WTC11 (cell line): ENCODE measurements at regions of chr3 and their contacts with region 1.

Region 1: DNA sequence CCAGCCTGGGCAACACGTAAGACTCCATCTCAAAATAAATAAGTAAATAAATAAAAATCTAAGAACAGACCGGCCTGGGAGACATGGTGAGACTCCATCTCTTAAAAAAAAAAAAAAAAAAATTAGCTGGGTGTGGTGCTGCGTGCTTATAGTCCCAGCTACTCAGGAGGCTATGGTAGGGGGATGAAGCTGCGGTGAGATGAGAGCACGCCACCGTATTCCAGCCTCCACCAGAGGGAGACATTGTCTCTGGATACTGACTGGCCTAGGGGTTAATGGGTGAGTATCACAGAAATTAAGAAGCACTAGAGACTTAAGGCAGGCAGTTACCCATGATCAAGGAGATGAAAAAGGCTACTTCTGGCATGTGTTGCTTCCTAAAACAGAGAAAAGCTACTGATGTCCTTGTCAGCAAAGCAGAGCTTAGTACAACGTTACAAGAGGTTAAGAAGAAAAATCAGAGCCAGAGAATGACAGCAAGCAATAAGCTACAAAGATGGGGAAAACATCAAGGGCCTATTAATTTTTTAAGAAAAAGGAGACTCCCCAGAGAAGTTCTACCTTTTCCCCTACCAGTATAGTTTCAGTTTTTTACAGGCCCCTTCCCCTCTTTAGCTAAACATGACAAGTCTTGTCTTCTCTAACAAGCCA is 8.6 kb downstream of the TFRC start:
- DNase-seq: peak; percentile 69
- ATAC-seq: peak; percentile 92
- H3K4me3 Mint-ChIP-seq: no peak overlapping the region
- H3K27ac Mint-ChIP-seq: peak overlapping the region; percentile 91; the same call in 1 of the 2 replicates
- H3K4me1 Mint-ChIP-seq: peaks cover 11% of the 10 kb centered on the region
- H3K27me3 Mint-ChIP-seq: no peaks in the 10 kb centered on the region
- CTCF ChIP-seq: peak; percentile 40

Region 2: GRCh38 chr3:196096382-196096953 is 23.2 kb after region 1 on chr3:
- CTCF ChIA-PET with region 1: interaction called, 11 read pairs
- POLR2A ChIA-PET with region 1: no interaction called
- DNase-seq: no peak
- ATAC-seq: no peak
- H3K4me3 Mint-ChIP-seq: no peak overlapping the region
- H3K27ac Mint-ChIP-seq: peak overlapping the region; percentile 78
- H3K4me1 Mint-ChIP-seq: peaks cover 9% of the 10 kb centered on the region
- H3K27me3 Mint-ChIP-seq: no peaks in the 10 kb centered on the region
- CTCF ChIP-seq: no peak

Region 3: GRCh38 chr3:196186651-196187573 is 113.6 kb after region 1 on chr3:
- CTCF ChIA-PET with region 1: interaction called, 50 read pairs
- POLR2A ChIA-PET with region 1: no interaction called
- DNase-seq: peak; percentile 70
- ATAC-seq: peak; percentile 95
- H3K4me3 Mint-ChIP-seq: peak overlapping the region; percentile 34
- H3K27ac Mint-ChIP-seq: peak overlapping the region; percentile 41
- H3K4me1 Mint-ChIP-seq: peaks cover 10% of the 10 kb centered on the region
- H3K27me3 Mint-ChIP-seq: no peaks in the 10 kb centered on the region
- CTCF ChIP-seq: no peak

Region 4: DNA sequence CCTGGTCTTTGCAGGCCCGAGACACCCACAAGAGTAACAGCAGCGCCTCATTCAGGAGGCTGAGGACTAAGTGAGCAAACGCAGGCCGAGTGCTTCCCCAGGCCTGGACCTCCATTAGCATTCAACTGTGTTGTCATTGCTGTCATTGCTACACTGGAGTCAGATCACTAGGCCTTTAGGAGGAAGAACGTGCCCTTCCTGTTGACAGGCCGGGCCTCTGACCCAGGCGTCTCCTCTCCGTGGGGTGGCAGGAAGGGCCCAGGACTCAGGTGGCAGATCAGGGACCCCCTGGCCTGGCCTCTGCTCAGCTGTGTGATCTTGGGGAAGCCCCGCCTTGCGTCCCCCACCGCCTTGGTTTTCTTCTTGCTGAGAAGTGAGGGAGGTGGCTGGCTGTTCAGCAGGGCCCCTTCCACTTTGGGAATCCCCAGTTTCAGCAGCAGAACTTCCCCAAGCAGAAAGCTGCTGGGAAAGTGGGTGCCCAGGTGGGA is 118.8 kb after region 1 on chr3:
- CTCF ChIA-PET with region 1: interaction called, 58 read pairs
- POLR2A ChIA-PET with region 1: no interaction called
- DNase-seq: peak; percentile 72
- ATAC-seq: peak; percentile 51
- H3K4me3 Mint-ChIP-seq: no peak overlapping the region
- H3K27ac Mint-ChIP-seq: no peak overlapping the region
- H3K4me1 Mint-ChIP-seq: peaks cover 9% of the 10 kb centered on the region
- H3K27me3 Mint-ChIP-seq: no peaks in the 10 kb centered on the region
- CTCF ChIP-seq: no peak

Region 5: DNA sequence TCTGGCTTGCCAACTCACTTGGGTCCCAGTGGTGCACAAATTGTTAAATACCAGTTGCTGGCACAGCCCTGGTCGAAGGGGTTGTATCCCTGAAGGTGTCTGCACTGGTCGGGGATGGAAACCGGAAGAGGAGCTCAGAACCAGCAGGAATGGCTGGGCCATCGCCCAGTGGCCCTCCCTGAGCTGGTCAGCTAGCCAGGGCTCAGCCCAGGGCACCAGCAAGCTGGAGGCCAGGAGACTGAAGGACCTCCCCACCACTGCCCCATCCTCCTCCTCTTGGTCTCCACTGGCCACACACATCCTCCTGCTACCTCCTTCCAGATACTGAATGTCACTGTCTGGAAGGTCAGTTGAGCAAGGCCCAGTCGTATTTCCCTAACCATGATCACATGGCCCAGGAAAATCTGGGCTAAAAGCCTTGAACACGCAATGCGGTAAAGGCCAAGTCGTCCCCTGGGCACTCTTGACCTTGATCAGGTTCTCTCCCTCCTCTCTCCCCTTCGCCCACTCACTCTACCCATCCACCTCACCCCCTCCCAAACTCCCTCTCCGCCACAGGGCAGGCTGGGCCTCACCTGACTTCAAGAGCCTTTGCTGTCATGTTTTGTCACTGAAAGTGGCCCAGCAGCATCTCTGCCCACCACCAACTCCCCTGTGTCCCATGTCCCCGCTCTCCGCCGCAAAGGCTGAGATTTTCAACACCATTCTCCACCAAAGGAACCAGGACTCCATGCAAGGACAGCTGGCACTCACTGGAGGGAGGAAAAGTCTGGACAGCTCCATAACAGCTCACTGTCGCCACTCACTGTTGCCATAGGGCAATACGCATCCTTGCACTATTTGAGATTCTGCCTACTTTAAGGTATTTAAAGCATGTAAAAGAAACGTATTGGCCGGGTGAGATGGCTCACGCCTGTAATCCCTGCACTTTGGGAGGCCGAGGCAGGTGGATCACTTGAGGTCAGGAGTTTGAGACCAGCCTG is 125.7 kb after region 1 on chr3:
- CTCF ChIA-PET with region 1: interaction called, 58 read pairs
- POLR2A ChIA-PET with region 1: no interaction called
- DNase-seq: no peak
- ATAC-seq: peak; percentile 27; the same call in 1 of the 2 replicates
- H3K4me3 Mint-ChIP-seq: no peak overlapping the region
- H3K27ac Mint-ChIP-seq: peak overlapping the region; percentile 5; the same call in 1 of the 2 replicates
- H3K4me1 Mint-ChIP-seq: no peaks in the 10 kb centered on the region
- H3K27me3 Mint-ChIP-seq: peaks cover 5% of the 10 kb centered on the region
- CTCF ChIP-seq: no peak